ENCODE measurements at regions of chrX and their contacts with region 1.

Region 1: DNA sequence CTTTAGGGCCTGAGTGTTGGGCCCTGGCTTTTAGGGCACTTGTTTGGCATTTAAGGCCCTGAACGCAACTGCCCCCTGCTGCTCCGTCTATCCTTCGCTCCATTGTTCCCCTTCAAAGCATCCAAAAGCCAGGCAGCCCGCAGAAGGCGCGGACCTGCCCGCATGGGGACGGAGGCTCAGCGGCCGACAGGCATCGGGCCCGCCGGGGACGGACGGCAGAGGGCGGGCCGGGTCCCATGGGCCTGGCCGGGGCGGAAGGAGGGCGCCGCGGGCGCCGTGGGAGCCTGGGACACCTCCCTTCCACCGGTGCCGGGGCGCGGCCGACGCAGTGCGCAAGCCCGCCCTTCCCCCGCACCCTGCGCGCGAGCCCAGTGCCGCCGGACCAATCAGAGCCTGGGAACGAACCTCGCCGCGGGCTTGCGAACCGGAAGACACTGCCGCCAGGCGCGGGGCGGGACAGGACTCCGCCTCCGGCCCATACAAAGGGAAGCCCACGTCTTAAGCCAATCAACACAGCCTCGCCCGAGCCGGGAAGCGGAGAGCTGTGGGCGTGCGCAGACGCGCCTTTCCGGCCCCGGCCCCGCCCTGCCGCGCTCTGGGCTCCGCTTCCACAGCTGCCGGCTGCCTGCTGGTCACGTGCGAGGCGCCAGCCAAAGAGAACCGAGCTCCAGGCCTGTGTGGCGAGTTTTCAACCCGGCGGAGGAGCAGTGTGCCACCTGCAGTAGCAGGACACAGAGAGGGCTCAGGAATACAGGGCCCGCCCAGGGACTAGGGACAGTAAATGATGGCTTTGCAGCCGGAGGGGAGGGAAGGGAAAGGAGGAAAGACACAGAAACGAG is 2.1 kb upstream of the ARHGAP4 start:
- DNase-seq: peak; percentile 92 to 94
- ATAC-seq: peak; percentile 90 to 95 (median 93)
- H3K4me3 ChIP-seq: peak overlapping the region; percentile 44 to 71 (median 60)
- H3K27ac ChIP-seq: peak overlapping the region; percentile 94 to 99 (median 97)
- H3K4me1 ChIP-seq: peaks cover 0 to 65% (median 49%) of the 10 kb centered on the region in 9 donors
- H3K27me3 ChIP-seq: peaks cover 0 to 36% (median 0%) of the 10 kb centered on the region in 7 donors
- CTCF ChIP-seq: peak in 7 of 9 donors; percentile 7 to 46 (median 22)

Region 2: DNA sequence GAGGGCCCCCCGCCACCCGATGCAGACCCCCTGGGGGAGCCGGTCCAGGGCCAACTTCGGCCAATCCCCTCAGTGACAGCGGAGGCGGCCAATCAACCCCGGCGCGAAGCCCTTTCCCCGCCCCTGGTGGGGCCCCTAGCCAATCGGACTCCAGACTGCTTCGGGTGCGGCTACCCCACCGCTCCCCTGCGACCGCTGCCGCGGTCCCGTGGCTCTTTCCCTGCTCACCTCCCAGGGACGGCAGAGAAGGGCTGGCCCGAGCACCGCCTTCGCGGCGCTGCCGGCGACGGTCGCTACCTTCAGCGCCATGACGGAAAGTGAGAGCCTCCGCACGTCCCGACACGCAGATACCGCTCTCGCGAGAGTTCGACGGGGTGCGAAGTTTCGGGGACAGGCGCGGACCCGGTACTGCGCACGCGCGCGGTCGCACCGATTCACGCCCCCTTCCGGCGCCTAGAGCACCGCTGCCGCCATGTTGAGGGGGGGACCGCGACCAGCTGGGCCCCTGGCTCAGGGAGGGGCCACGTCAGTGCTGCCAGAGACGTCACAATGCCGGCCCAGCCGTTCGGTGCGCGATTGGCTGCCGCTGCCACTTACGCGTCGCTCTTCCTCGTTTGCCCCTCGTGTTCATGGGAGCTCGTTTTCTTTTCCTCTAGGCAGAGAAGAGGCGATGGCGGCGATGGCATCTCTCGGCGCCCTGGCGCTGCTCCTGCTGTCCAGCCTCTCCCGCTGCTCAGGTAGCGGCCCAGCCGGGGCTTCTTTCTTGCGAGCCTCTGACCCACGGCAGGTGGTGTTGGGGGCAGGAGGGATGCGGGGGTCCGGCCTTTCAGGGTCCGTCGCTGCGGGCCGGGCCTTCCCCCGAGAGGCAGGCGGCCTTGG is 133.9 kb before region 1 on chrX and contains the starts of genes IDH3G and SSR4:
- intact Hi-C with region 1: loop called in 3 of 10 experiments (anchors 10 kb)
- DNase-seq: peak; percentile 91 to 93
- ATAC-seq: peak; percentile 93 to 97 (median 96)
- H3K4me3 ChIP-seq: peak within 1 kb of the TSS; percentile 53 to 80 (median 75)
- H3K27ac ChIP-seq: peak within 1 kb of the TSS; percentile 88 to 97 (median 94)
- H3K4me1 ChIP-seq: peaks cover 0 to 44% (median 26%) of the 10 kb centered on the region in 9 donors
- H3K27me3 ChIP-seq: no peaks in the 10 kb centered on the region
- CTCF ChIP-seq: peak in 7 of 9 donors; percentile 7 to 54 (median 31)
- total RNA-seq, gene IDH3G: 58.7 to 86.9 (median 74.5) TPM
- total RNA-seq, gene SSR4: 94.1 to 227 (median 144) TPM

Region 3: DNA sequence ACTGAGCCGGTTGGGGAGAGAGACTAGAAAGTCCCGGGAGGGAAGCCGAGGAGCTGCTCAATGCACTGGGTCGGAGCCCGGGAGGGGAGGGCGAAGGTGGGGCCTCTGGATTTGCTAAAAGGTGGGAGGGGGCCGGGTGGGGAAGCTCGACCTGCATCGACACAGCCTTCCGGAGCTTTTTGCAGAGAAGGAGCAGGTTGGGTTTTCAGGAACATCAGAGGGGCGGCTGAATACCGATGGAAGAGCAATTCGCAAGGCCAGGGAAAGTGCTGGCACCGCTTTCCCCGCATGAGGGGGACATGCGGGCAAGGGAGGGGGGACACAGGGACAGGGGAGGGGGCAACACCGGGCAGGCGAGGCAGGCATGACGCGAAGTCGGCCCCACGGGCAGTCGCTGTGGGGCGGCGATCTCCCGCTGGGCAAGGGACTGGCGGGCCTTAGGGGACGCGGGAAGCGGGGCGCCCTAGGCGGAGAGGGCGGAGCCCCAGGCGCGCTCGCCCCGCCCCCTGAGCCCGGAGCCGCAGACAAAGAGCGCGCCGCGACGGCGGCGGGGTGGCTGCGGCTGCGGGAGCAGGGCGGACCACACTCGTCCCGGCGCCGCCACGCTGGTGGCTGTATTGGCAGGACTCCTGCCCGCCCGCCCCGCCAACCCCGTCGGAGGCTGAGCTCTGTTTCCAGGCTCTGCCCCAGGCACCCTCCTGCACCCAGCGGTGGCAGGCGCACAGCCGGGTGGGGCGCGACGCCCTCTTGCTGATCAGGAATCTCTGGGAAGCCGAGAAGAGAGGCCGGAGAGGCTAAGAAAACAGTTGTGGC is 109.4 kb before region 1 on chrX:
- intact Hi-C with region 1: loop called in 1 of 10 experiments (anchors 10 kb)
- DNase-seq: peak in 1 of 2 donors; percentile 60
- ATAC-seq: peak; percentile 61 to 89 (median 78)
- H3K4me3 ChIP-seq: peak overlapping the region; percentile 32 to 57 (median 50)
- H3K27ac ChIP-seq: peak overlapping the region in 5 of 10 donors; percentile 6 to 53 (median 34)
- H3K4me1 ChIP-seq: peaks cover 0 to 7% (median 0%) of the 10 kb centered on the region in 9 donors
- H3K27me3 ChIP-seq: peaks cover 0 to 76% (median 0%) of the 10 kb centered on the region in 7 donors
- CTCF ChIP-seq: no peak

Region 4: DNA sequence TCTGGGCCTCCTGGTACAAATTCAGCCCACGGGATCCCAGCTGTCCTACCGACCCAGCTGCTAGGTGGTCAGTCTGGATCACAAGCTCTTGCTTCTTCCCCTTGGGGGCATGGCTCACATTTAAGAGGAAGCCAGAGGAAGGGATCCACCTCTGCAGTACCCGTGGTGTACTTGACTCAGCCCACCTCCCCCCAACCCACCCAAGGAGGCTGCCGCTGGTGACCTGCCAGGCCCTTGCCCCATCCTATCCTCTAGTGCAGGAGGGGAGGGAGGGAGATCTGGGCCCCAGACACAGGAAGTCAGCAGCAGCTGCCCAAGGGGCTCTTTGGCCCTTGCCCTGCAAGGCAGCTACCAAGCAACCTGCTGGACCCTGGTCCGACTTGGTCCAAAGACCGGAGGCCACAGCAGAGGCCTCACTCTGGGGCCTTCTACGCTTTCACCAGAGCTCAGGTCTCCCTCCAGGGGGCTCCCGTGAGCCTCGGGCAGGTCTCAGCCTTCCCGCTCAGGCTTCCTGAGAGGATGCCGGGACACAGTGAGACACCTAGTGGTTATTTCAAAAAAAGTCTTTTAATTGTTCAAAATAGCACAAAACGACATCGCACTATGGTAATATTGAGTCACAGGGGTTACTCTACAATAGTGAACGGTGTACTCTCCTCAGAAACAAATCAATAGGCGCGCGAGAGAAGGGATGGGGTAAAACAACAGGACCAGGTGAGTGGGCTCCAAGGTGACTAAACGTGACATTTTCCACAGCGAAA is 19.0 kb after region 1 on chrX:
- intact Hi-C with region 1: loop called in 1 of 10 experiments (anchors 2 kb)
- DNase-seq: peak; percentile 64 to 73
- ATAC-seq: peak; percentile 48 to 81 (median 71)
- H3K4me3 ChIP-seq: no peak overlapping the region
- H3K27ac ChIP-seq: peak overlapping the region; percentile 11 to 78 (median 70)
- H3K4me1 ChIP-seq: peaks cover 0 to 40% (median 11%) of the 10 kb centered on the region in 9 donors
- H3K27me3 ChIP-seq: peaks cover 0 to 29% (median 0%) of the 10 kb centered on the region in 7 donors
- CTCF ChIP-seq: peak; percentile 62 to 91 (median 75)

Region 5: DNA sequence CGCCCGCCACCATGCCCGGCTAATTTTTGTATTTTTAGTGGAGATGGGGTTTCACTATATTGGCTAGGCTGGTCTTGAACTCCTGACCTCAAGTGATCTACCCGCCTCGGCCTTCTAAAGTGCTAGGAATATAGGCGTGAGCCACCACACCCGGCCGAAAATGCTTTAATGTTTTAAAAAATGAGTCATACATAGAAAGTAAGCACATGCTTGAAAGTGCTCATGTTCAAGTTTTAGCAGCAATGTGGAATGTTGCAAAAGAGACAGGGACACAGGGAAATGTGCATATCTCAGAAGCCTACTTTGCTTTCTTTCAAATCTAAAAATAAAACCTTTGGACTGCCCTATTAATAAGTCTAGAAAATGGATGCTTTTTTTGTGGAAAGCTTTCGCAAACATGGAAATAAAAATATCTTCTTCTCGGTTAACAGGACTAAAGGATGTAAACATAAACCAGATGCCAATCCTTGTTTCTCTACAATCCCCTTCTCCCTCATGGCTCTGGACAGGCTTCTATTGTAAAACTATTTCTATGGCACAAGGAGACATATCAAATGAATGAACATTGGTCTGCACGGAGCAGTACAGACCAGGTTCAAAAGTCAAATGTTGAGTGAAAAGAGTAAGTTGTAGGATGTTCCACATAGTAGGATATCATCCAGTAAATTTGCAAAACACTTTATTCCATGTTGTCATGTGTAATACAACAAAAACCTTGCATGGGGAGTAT is 154.4 kb after region 1 on chrX:
- intact Hi-C with region 1: no loop called
- DNase-seq: no peak
- ATAC-seq: peak in 4 of 8 donors; percentile 23 to 37 (median 30)
- H3K4me3 ChIP-seq: no peak overlapping the region
- H3K27ac ChIP-seq: peak overlapping the region in 5 of 10 donors; percentile 32 to 70 (median 40)
- H3K4me1 ChIP-seq: peaks cover 0 to 50% (median 25%) of the 10 kb centered on the region in 9 donors
- H3K27me3 ChIP-seq: peaks cover 0 to 18% (median 0%) of the 10 kb centered on the region in 7 donors
- CTCF ChIP-seq: no peak